MCF 10A (cell line): ENCODE measurements at regions of chr6 and their contacts with region 1.

Region 1: GRCh38 chr6:87832025-87832825 is 130.2 kb upstream of the AKIRIN2 start:
- DNase-seq: peak; percentile 32
- H3K4me3 Mint-ChIP-seq: peak overlapping the region; percentile 75
- H3K27ac Mint-ChIP-seq: peak overlapping the region; percentile 76
- H3K4me1 Mint-ChIP-seq: no peaks in the 10 kb centered on the region
- H3K27me3 Mint-ChIP-seq: peaks cover 17% of the 10 kb centered on the region
- CTCF ChIP-seq: peak; percentile 6

Region 2: DNA sequence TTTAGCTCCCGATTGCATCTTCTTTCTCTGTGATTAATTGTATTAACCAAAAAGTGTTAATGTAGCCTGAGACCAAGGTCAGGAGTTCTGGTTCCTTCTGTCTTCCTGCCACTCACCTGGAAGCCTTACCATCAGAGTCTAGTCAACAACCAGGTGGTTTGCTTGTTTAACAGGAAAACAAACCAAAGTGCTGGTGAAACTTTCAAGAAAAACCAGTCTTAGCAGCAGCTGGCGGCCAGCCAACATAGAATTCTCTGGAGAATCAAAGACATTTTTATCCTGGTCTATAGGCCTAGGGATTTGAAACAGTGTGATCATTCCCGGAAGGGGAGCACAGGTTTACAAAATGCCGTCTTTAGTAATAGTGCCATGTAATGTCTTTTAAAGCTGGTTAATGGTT is 16.3 kb after region 1 on chr6:
- CTCF ChIA-PET with region 1: interaction called, 27 read pairs
- POLR2A ChIA-PET with region 1: interaction called, 3 read pairs
- intact Hi-C with region 1: no loop called
- DNase-seq: peak; percentile 14
- H3K4me3 Mint-ChIP-seq: no peak overlapping the region
- H3K27ac Mint-ChIP-seq: no peak overlapping the region
- H3K4me1 Mint-ChIP-seq: peaks cover 5% of the 10 kb centered on the region
- H3K27me3 Mint-ChIP-seq: peaks cover 34% of the 10 kb centered on the region
- CTCF ChIP-seq: no peak

Region 3: GRCh38 chr6:87935196-87935595 is 103.0 kb after region 1 on chr6:
- CTCF ChIA-PET with region 1: interaction called, 13 read pairs
- POLR2A ChIA-PET with region 1: no interaction called
- intact Hi-C with region 1: no loop called
- DNase-seq: no peak
- H3K4me3 Mint-ChIP-seq: no peak overlapping the region
- H3K27ac Mint-ChIP-seq: no peak overlapping the region
- H3K4me1 Mint-ChIP-seq: peaks cover under 1% of the 10 kb centered on the region
- H3K27me3 Mint-ChIP-seq: no peaks in the 10 kb centered on the region
- CTCF ChIP-seq: no peak

Region 4: GRCh38 chr6:87944541-87944954 is 112.3 kb after region 1 on chr6:
- CTCF ChIA-PET with region 1: interaction called, 16 read pairs
- POLR2A ChIA-PET with region 1: no interaction called
- intact Hi-C with region 1: loop called (anchors 1 kb)
- DNase-seq: peak; percentile 68
- H3K4me3 Mint-ChIP-seq: no peak overlapping the region
- H3K27ac Mint-ChIP-seq: peak overlapping the region; percentile 43
- H3K4me1 Mint-ChIP-seq: peaks cover 23% of the 10 kb centered on the region
- H3K27me3 Mint-ChIP-seq: peaks cover 11% of the 10 kb centered on the region
- CTCF ChIP-seq: peak; percentile 22

Region 5: DNA sequence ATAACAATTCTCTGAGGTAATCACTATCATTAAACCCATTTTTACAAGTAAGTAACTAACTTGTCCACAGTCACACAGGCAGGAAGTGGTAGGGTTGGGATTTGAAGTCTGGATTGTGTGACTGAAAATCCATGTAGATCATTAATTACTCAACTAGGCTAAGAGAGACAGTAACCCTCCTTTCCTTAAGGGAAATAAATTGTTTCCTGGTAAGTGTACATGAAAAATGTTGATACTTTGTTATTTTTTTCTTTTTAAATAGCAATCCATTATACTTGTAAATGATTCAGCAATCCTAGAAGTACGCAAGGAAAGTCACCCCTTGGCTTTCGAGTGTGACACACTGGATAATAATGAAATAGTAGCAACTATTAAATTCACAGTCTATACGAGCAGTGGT is 227.0 kb after region 1 on chr6:
- CTCF ChIA-PET with region 1: no interaction called
- POLR2A ChIA-PET with region 1: no interaction called
- intact Hi-C with region 1: no loop called
- DNase-seq: no peak
- H3K4me3 Mint-ChIP-seq: no peak overlapping the region
- H3K27ac Mint-ChIP-seq: no peak overlapping the region
- H3K4me1 Mint-ChIP-seq: no peaks in the 10 kb centered on the region
- H3K27me3 Mint-ChIP-seq: peaks cover 35% of the 10 kb centered on the region
- CTCF ChIP-seq: no peak

Region 6: GRCh38 chr6:88492824-88493223 is 660.6 kb after region 1 on chr6:
- CTCF ChIA-PET with region 1: interaction called, 19 read pairs
- POLR2A ChIA-PET with region 1: no interaction called
- intact Hi-C with region 1: loop called (anchors 2 kb)
- DNase-seq: peak; percentile 46
- H3K4me3 Mint-ChIP-seq: no peak overlapping the region
- H3K27ac Mint-ChIP-seq: no peak overlapping the region
- H3K4me1 Mint-ChIP-seq: peaks cover 23% of the 10 kb centered on the region
- H3K27me3 Mint-ChIP-seq: no peaks in the 10 kb centered on the region
- CTCF ChIP-seq: peak; percentile 64

Region 7: GRCh38 chr6:88780714-88781389 is 948.6 kb after region 1 on chr6:
- CTCF ChIA-PET with region 1: interaction called, 3 read pairs
- POLR2A ChIA-PET with region 1: no interaction called
- intact Hi-C with region 1: loop called (anchors 5 kb)
- DNase-seq: peak; percentile 91
- H3K4me3 Mint-ChIP-seq: no peak overlapping the region
- H3K27ac Mint-ChIP-seq: no peak overlapping the region
- H3K4me1 Mint-ChIP-seq: peaks cover 5% of the 10 kb centered on the region
- H3K27me3 Mint-ChIP-seq: no peaks in the 10 kb centered on the region
- CTCF ChIP-seq: peak; percentile 70